Caco-2 (cell line): ENCODE measurements at regions of chr7 and their contacts with region 1.

Region 1: DNA sequence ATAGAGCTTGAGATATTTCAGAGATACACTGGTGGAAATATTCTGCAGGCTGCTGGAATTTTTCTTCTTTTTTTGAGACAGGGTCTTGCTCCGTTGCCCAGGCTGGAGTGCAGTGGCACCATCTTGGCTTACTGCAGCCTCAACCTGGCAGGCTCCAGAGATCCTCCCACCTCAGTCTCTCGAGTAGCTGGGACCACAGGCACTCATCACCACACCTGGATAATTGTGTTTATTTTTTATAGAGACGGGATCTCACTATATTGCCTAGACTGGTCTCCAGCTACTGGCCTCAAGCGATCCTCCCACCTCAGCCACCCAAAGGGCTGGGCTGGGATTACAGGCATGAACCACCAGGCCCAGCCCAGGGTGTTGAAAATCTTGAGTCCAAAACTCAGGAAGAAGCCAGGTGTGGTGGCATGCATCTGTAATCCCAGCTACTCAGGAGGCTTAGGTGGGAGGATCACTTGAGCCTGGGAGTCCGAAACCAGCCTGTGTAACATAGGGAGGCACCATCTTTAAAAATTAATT is 55.7 kb upstream of the FOXK1 start:
- DNase-seq: no peak
- H3K4me3 ChIP-seq: no peak overlapping the region
- H3K4me3 Mint-ChIP-seq: peak overlapping the region; percentile 33
- H3K27ac Mint-ChIP-seq: peak overlapping the region; percentile 13
- H3K4me1 ChIP-seq: peaks cover 27% of the 10 kb centered on the region
- H3K4me1 Mint-ChIP-seq: peaks cover 12% of the 10 kb centered on the region
- H3K27me3 ChIP-seq: no peaks in the 10 kb centered on the region
- H3K27me3 Mint-ChIP-seq: no peaks in the 10 kb centered on the region
- CTCF ChIP-seq: no peak

Region 2: GRCh38 chr7:4436361-4436895 is 190.0 kb before region 1 on chr7:
- CTCF ChIA-PET with region 1: no interaction called
- POLR2A ChIA-PET with region 1: no interaction called
- intact Hi-C with region 1: loop called (anchors 2 kb)
- DNase-seq: peak; percentile 66 to 75
- H3K4me3 ChIP-seq: no peak overlapping the region
- H3K4me3 Mint-ChIP-seq: peak overlapping the region; percentile 72
- H3K27ac Mint-ChIP-seq: peak overlapping the region; percentile 96
- H3K4me1 ChIP-seq: peaks cover 43% of the 10 kb centered on the region
- H3K4me1 Mint-ChIP-seq: peaks cover 41% of the 10 kb centered on the region
- H3K27me3 ChIP-seq: no peaks in the 10 kb centered on the region
- H3K27me3 Mint-ChIP-seq: no peaks in the 10 kb centered on the region
- CTCF ChIP-seq: no peak

Region 3: DNA sequence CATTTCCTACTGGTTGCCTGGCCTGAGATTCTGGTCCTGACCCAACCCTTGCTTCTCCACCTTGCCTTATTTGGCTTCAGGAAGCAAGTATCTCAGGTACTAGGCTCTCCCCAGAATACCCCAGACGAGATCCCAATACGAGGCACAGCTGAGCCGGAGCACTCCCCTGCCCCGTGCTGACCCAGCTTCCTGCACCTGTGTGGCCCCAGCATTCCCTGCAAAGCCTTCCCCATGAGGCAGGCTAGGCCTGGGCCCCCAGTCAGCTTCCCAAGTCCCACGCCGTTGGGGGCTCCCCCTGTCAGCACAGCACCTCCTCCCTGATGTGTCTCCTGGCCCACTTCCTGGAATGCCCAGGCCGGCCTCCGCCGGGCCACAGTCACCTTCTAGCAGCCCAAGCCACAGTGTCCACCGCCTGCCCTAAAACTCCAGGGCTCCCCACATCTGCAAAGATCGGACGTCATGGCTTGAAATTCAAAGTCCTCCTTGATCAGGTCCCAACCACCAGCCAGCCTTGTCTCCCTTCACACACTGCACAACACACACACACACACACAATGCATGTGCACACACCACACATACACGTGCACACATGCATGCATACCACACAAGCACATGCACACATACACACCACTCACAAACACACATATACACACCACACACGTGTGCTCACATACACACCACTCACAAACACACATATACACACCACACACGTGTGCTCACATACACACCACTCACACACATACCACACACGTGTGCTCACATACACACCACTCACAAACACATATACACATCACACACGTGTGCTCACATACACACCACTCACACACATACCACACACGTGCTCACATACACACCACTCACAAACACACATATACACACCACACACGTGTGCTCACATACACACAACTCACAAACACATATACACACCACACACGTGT is 23.2 kb before region 1 on chr7:
- CTCF ChIA-PET with region 1: no interaction called
- POLR2A ChIA-PET with region 1: no interaction called
- intact Hi-C with region 1: no loop called
- DNase-seq: no peak
- H3K4me3 ChIP-seq: no peak overlapping the region
- H3K4me3 Mint-ChIP-seq: no peak overlapping the region
- H3K27ac Mint-ChIP-seq: no peak overlapping the region
- H3K4me1 ChIP-seq: no peaks in the 10 kb centered on the region
- H3K4me1 Mint-ChIP-seq: peaks cover 8% of the 10 kb centered on the region
- H3K27me3 ChIP-seq: no peaks in the 10 kb centered on the region
- H3K27me3 Mint-ChIP-seq: no peaks in the 10 kb centered on the region
- CTCF ChIP-seq: no peak